ENCODE measurements at regions of chr21 and their contacts with region 1.

Region 1: GRCh38 chr21:39137248-39138178 is 45.7 kb downstream of the PSMG1 start:
- DNase-seq: peak; percentile 43
- ATAC-seq: peak; percentile 67
- H3K4me3 ChIP-seq: no peak overlapping the region
- H3K27ac ChIP-seq: no peak overlapping the region
- H3K4me1 ChIP-seq: peaks cover 51% of the 10 kb centered on the region
- H3K27me3 ChIP-seq: peaks cover 0 to 16% of the 10 kb centered on the region in 2 experiments; a peak in 1 of 5 replicates
- CTCF ChIP-seq: peak; percentile 47
- EP300 ChIP-seq: no peak
- POLR2A ChIP-seq: no peak
- RAD21 ChIP-seq: no peak

Region 2: GRCh38 chr21:38505654-38506515 is 631.6 kb before region 1 on chr21:
- CTCF ChIA-PET with region 1: interaction called, 4 read pairs
- POLR2A ChIA-PET with region 1: no interaction called
- in situ Hi-C with region 1: loop called (anchors 10 kb)
- intact Hi-C with region 1: loop called (anchors 2 kb)
- DNase-seq: peak; percentile 62
- ATAC-seq: peak; percentile 95
- H3K4me3 ChIP-seq: no peak overlapping the region
- H3K27ac ChIP-seq: no peak overlapping the region
- H3K4me1 ChIP-seq: peaks cover 17% of the 10 kb centered on the region
- H3K27me3 ChIP-seq: peaks cover 0 to 5% of the 10 kb centered on the region in 2 experiments; a peak in 2 of 5 replicates
- CTCF ChIP-seq: peak; percentile 77
- EP300 ChIP-seq: no peak
- POLR2A ChIP-seq: no peak
- RAD21 ChIP-seq: 0 out of 2 replicates have a peak, but pooled peaks have one; percentile 31

Region 3: GRCh38 chr21:38669176-38669575 is 468.3 kb before region 1 on chr21:
- CTCF ChIA-PET with region 1: interaction called, 5 read pairs
- POLR2A ChIA-PET with region 1: no interaction called
- in situ Hi-C with region 1: no loop called
- intact Hi-C with region 1: loop called (anchors 2 kb)
- DNase-seq: peak; percentile 20
- ATAC-seq: peak; percentile 80
- H3K4me3 ChIP-seq: no peak overlapping the region
- H3K27ac ChIP-seq: no peak overlapping the region
- H3K4me1 ChIP-seq: peaks cover 20% of the 10 kb centered on the region
- H3K27me3 ChIP-seq: no peaks in the 10 kb centered on the region; a peak in 1 of 5 replicates
- CTCF ChIP-seq: peak; percentile 47
- EP300 ChIP-seq: no peak
- POLR2A ChIP-seq: no peak
- RAD21 ChIP-seq: no peak

Region 4: GRCh38 chr21:38733973-38734546 is 403.5 kb before region 1 on chr21:
- CTCF ChIA-PET with region 1: interaction called, 23 read pairs
- POLR2A ChIA-PET with region 1: no interaction called
- in situ Hi-C with region 1: loop called (anchors 5 kb)
- intact Hi-C with region 1: loop called (anchors 1 kb)
- DNase-seq: peak; percentile 61
- ATAC-seq: peak; percentile 85
- H3K4me3 ChIP-seq: no peak overlapping the region
- H3K27ac ChIP-seq: no peak overlapping the region
- H3K4me1 ChIP-seq: peaks cover 31% of the 10 kb centered on the region
- H3K27me3 ChIP-seq: no peaks in the 10 kb centered on the region
- CTCF ChIP-seq: peak; percentile 96
- EP300 ChIP-seq: no peak
- POLR2A ChIP-seq: no peak
- RAD21 ChIP-seq: peak; percentile 92

Region 5: GRCh38 chr21:38819714-38820183 is 317.8 kb before region 1 on chr21:
- CTCF ChIA-PET with region 1: no interaction called
- POLR2A ChIA-PET with region 1: no interaction called
- in situ Hi-C with region 1: no loop called
- intact Hi-C with region 1: loop called (anchors 5 kb)
- DNase-seq: no peak
- ATAC-seq: no peak
- H3K4me3 ChIP-seq: no peak overlapping the region
- H3K27ac ChIP-seq: no peak overlapping the region
- H3K4me1 ChIP-seq: peaks cover 65% of the 10 kb centered on the region
- H3K27me3 ChIP-seq: no peaks in the 10 kb centered on the region
- CTCF ChIP-seq: no peak
- EP300 ChIP-seq: no peak
- POLR2A ChIP-seq: peak in 1 of 2 experiments; percentile 34; a peak in 1 of 4 replicates
- RAD21 ChIP-seq: no peak

Region 6: DNA sequence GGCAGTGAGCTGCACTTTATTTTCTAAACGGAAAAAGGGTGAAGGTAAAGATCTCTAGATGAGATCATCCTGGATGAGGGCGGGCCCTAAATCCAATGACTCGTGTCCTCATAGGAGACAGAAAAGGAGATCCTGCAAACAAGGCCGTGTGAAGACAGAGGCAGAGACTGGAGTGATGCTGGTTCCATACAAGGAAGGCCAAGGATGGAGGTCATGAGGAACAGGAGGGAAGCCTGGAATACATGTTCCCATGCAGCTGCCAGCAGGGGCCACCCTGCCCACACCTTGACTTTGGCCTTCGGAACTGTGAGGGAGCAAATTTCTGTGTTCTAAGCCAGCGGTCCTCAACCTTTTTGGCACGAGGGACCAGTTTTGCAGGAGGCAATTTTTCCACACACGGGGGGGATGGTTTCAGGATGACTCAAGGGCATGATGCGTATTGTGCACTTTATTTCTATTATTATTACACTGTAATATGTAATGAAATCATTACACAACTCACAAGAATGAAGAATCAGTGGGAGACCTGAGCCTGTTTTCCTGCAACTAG is 48.6 kb before region 1 on chr21:
- CTCF ChIA-PET with region 1: interaction called, 4 read pairs
- POLR2A ChIA-PET with region 1: no interaction called
- in situ Hi-C with region 1: loop called (anchors 5 kb)
- intact Hi-C with region 1: loop called (anchors 1 kb)
- DNase-seq: peak; percentile 50
- ATAC-seq: peak; percentile 71
- H3K4me3 ChIP-seq: no peak overlapping the region
- H3K27ac ChIP-seq: no peak overlapping the region
- H3K4me1 ChIP-seq: peaks cover 73% of the 10 kb centered on the region
- H3K27me3 ChIP-seq: no peaks in the 10 kb centered on the region
- CTCF ChIP-seq: peak; percentile 80
- EP300 ChIP-seq: no peak
- POLR2A ChIP-seq: no peak
- RAD21 ChIP-seq: peak; percentile 55